B cell (primary cell): ENCODE measurements at regions of chr21 and their contacts with region 1.

Region 1: GRCh38 chr21:44933611-44934191 is 6.1 kb upstream of the SLX9 start:
- DNase-seq: no peak
- ATAC-seq: no peak
- H3K4me3 ChIP-seq: no peak overlapping the region
- H3K4me3 Mint-ChIP-seq: peak overlapping the region; percentile 23
- H3K27ac ChIP-seq: no peak overlapping the region
- H3K27ac Mint-ChIP-seq: no peak overlapping the region
- H3K4me1 ChIP-seq: peaks cover 32 to 43% of the 10 kb centered on the region in 2 donors
- H3K4me1 Mint-ChIP-seq: peaks cover 38% of the 10 kb centered on the region
- H3K27me3 ChIP-seq: no peaks in the 10 kb centered on the region
- H3K27me3 Mint-ChIP-seq: no peaks in the 10 kb centered on the region
- CTCF ChIP-seq: no peak

Region 2: DNA sequence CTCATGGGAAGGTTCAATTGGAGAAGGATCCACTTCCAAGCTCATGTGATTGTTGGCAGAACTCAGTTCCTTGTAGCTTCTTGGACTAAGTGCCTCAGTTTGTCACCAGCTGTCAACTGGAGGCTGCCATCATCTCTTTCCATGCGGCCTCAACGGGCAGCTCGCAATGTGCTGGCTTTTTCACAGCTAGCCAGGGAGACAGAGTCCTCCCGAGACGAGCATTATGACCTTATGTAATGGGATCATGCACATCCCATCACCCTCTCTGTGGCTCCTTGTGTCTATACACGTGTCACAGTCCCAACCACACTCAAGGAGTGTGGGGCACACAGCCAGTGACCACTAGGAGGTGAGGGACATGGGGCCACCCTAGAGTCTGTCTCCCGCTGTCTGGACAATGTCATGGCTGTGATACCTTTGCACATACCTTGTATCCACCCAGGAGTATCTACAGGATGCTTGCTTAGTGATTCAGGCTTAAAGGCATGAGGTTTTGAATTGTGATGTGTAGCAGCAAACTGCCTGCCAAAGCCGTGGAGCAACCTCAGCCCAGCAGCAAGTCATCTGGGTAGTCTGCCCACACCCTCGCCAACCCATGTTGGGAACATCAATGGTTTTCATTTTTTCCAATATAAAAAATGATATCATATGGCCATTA is 337.5 kb before region 1 on chr21:
- CTCF ChIA-PET with region 1: no interaction called
- POLR2A ChIA-PET with region 1: no interaction called
- intact Hi-C with region 1: no loop called
- DNase-seq: no peak
- ATAC-seq: no peak
- H3K4me3 ChIP-seq: no peak overlapping the region
- H3K4me3 Mint-ChIP-seq: no peak overlapping the region
- H3K27ac ChIP-seq: no peak overlapping the region
- H3K27ac Mint-ChIP-seq: no peak overlapping the region
- H3K4me1 ChIP-seq: no peaks in the 10 kb centered on the region
- H3K4me1 Mint-ChIP-seq: no peaks in the 10 kb centered on the region
- H3K27me3 ChIP-seq: peaks cover 0 to 3% (median 0%) of the 10 kb centered on the region in 4 experiments
- H3K27me3 Mint-ChIP-seq: peaks cover 25% of the 10 kb centered on the region
- CTCF ChIP-seq: no peak

Region 3: GRCh38 chr21:44880762-44881585 is 52.7 kb before region 1 on chr21:
- CTCF ChIA-PET with region 1: interaction called, 19 read pairs
- POLR2A ChIA-PET with region 1: interaction called, 10 read pairs
- intact Hi-C with region 1: no loop called
- DNase-seq: peak; percentile 60
- ATAC-seq: peak; percentile 31
- H3K4me3 ChIP-seq: no peak overlapping the region
- H3K4me3 Mint-ChIP-seq: peak overlapping the region; percentile 61
- H3K27ac ChIP-seq: peak overlapping the region in 1 of 2 donors; percentile 13
- H3K27ac Mint-ChIP-seq: peak overlapping the region; percentile 62
- H3K4me1 ChIP-seq: peaks cover 45 to 49% of the 10 kb centered on the region in 2 donors
- H3K4me1 Mint-ChIP-seq: peaks cover 43% of the 10 kb centered on the region
- H3K27me3 ChIP-seq: no peaks in the 10 kb centered on the region
- H3K27me3 Mint-ChIP-seq: no peaks in the 10 kb centered on the region
- CTCF ChIP-seq: no peak